ENCODE measurements at regions of chr17 and their contacts with region 1.

Region 1: GRCh38 chr17:17812211-17813057 is 24.4 kb downstream of the SREBF1 start:
- DNase-seq: peak; percentile 73
- H3K4me3 ChIP-seq: no peak overlapping the region
- H3K27ac ChIP-seq: no peak overlapping the region
- H3K4me1 ChIP-seq: no peaks in the 10 kb centered on the region
- H3K27me3 ChIP-seq: no peaks in the 10 kb centered on the region
- CTCF ChIP-seq: peak; percentile 100

Region 2: DNA sequence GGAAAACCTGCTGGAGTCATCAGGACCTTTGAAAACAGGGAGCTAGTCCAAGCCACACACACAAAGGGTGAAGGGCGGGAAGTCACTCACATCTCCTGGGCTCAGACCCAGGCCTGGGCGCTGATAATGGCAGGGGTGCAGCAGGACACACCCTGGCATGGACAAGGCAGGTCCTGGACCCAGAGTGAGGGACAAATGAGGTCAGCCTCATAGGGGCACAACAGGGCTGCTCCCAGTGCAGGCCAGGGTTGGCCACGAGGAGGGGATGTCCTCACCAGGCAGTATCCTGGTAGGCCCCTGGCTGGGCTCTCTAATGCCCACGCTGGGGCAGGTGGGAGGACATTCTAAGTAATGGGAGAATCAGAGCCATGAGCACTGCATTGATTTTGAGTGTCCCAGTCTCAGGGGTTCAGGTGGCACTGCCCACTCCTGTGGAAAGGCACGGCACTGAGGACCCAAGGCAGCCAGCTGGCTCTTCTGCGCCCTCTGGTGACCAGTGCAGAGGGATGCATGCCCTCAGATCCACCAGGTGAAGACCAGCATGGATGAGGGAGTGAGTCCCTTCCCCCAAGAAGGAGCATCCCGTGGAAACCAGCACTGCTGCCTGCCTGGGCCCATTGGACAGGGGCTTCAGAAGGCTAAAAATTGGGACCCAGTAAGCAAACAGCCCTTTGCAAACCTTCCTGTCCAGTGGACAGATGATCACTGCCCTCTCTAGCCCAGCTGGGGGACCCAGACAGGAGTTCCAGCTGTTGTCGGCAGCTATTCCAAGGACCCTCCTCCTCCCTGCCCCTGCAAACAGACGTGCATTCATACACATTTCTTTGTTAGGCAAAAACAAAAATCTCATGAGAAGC is 47.7 kb after region 1 on chr17:
- intact Hi-C with region 1: loop called (anchors 2 kb)
- DNase-seq: peak; percentile 75
- H3K4me3 ChIP-seq: no peak overlapping the region
- H3K27ac ChIP-seq: no peak overlapping the region
- H3K4me1 ChIP-seq: no peaks in the 10 kb centered on the region
- H3K27me3 ChIP-seq: no peaks in the 10 kb centered on the region
- CTCF ChIP-seq: peak; percentile 96

Region 3: DNA sequence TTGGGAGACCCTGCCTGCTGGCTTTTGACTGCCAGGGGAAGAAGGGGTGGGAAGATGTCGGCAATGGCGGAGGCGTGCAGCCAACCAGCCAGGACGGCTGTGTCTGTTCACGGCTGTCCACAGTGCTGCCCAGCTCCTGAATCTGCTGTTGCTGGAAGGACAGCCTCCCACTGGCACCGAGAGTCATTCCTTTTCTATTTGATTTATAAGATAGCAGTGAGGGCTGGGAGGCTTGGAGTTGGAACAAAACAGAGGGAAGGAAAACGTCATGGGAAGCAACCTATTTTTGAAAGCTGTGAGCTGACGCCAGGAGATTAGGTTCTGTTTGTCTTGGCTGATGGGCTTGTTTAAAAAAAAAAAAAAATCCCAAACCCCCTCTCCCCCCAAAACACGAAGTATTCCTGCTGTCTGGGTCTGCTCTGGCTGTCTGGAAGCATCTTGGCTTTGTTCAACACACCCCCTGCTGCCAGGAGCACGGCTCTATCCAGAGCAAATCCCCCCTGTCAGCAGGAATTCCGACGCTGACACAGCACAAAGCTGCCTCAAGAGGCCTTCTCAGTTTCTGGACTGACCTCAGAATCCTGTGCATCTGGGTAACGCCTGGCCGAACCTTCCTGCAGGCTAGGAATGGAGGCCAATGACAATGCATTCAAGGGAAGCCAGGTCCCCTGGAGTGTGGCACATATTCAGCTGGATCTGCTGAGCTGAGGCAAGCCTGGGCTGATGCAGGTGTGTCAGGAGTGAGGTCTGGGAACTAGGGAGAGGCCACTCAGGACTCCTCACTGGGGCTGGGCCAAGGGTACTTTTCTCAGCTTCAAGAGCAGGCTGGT is 65.3 kb after region 1 on chr17:
- intact Hi-C with region 1: no loop called
- DNase-seq: peak; percentile 40
- H3K4me3 ChIP-seq: no peak overlapping the region
- H3K27ac ChIP-seq: peak overlapping the region; percentile 72
- H3K4me1 ChIP-seq: no peaks in the 10 kb centered on the region
- H3K27me3 ChIP-seq: no peaks in the 10 kb centered on the region
- CTCF ChIP-seq: no peak

Measured in colonic mucosa (tissue), 4 donors.